ENCODE measurements at regions of chr5 and their contacts with region 1.

Region 1: GRCh38 chr5:43313035-43313853 is at the start of gene HMGCS1:
- DNase-seq: peak; percentile 99
- H3K4me3 ChIP-seq: peak within 1 kb of the TSS; percentile 60 to 86 (median 82)
- H3K27ac ChIP-seq: peak within 1 kb of the TSS; percentile 86 to 98 (median 95)
- H3K4me1 ChIP-seq: peaks cover 13 to 53% (median 24%) of the 10 kb centered on the region in 6 donors
- H3K27me3 ChIP-seq: no peaks in the 10 kb centered on the region
- CTCF ChIP-seq: peak in 2 of 11 experiments; percentile 21 to 37
- POLR2A ChIP-seq: peak; percentile 69 to 97 (median 92)
- total RNA-seq, gene HMGCS1: 18.7 to 74.9 (median 30.0) TPM

Region 2: GRCh38 chr5:43120720-43121564 is 192.3 kb before region 1 on chr5 and contains the start of gene ZNF131:
- intact Hi-C with region 1: loop called (anchors 10 kb)
- DNase-seq: peak; percentile 100
- H3K4me3 ChIP-seq: peak within 1 kb of the TSS; percentile 55 to 86 (median 70)
- H3K27ac ChIP-seq: peak within 1 kb of the TSS; percentile 96 to 100 (median 98)
- H3K4me1 ChIP-seq: peaks cover 22 to 50% (median 41%) of the 10 kb centered on the region in 6 donors
- H3K27me3 ChIP-seq: no peaks in the 10 kb centered on the region
- CTCF ChIP-seq: peak in 6 of 11 experiments; percentile 8 to 56 (median 22)
- POLR2A ChIP-seq: peak in 2 of 3 donors; percentile 10 to 40
- total RNA-seq, gene ZNF131: 35.9 to 52.0 (median 44.6) TPM

Region 3: DNA sequence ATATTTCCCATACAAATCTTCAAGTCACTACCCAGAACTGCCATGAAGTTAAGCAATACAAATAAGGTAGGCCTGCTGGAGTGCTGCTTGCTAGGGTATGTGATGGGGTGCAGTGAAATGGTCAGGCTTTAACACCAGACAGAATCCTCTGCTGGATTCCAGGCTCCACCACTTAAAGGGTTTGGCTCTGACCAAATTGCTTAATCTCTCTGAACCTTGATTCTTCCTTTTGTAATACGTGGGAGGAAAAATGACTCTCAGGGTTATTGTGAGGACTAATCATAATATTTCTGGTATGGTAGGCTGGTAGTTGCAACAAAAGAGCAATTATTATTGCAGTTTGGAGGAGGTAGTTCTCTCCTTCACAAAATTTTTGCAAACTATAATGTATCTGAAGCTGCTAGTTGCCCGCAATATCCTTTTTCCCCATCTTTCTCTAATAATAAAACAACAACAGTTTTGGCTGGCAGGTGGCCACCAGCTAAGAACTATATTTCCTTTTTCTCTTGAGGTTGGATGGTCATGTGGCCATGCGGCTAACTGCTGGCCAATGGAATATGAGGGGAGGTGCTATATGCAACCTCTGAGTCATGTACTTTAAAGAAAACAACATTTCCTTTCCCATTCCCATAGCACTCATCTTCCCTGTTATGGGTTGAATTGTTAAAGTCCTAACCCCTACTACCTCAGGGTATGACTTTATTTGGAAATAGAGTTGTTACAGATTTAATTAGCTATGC is 54.8 kb after region 1 on chr5:
- intact Hi-C with region 1: no loop called
- DNase-seq: no peak
- H3K4me3 ChIP-seq: no peak overlapping the region
- H3K27ac ChIP-seq: no peak overlapping the region
- H3K4me1 ChIP-seq: no peaks in the 10 kb centered on the region
- H3K27me3 ChIP-seq: no peaks in the 10 kb centered on the region
- CTCF ChIP-seq: no peak
- POLR2A ChIP-seq: no peak

Region 4: DNA sequence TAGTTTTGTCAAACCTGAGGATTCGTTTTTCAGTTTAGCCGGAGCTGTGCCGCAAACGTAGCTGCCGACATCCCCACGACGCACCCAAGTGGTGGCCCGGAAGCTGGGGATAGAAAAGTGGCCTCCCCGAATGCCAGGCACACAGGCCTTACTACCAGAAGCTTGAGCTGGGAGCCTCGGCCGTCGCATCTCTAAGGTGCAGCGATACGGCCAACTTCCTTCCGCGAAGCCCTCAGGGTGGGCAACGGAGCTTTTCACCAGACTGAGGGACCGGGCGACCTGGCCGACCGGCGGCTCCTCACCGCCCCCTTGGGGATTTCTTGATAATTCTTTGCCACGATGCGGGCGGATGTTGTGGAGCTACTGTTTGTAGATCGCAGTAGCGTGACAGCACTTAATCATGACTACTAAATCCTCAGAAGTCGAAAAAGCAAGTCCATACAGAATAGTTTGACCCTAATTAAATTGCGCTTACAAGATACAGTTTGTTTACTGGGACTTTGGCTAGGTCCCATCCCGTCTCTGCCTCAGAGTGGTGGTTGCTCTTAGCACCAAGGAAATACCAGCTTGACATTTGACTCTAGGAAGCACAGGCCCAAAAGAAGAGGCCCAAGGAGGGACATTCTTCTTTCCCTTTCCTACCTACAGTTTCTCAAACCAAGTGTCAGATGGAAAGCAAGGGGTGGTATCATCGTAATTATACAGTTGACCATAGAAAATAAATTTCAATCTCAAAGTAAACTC is 171.0 kb after region 1 on chr5:
- intact Hi-C with region 1: loop called (anchors 10 kb)
- DNase-seq: peak; percentile 96
- H3K4me3 ChIP-seq: peak overlapping the region; percentile 65 to 86 (median 77)
- H3K27ac ChIP-seq: peak overlapping the region; percentile 95 to 99 (median 98)
- H3K4me1 ChIP-seq: peaks cover 14 to 38% (median 24%) of the 10 kb centered on the region in 6 donors
- H3K27me3 ChIP-seq: no peaks in the 10 kb centered on the region
- CTCF ChIP-seq: peak; percentile 34 to 82 (median 74)
- POLR2A ChIP-seq: peak in 1 of 3 donors; percentile 2

Measured in spleen (tissue), 13 donors.